BJ (cell line): ENCODE measurements at regions of chr11 and their contacts with region 1.

Region 1: DNA sequence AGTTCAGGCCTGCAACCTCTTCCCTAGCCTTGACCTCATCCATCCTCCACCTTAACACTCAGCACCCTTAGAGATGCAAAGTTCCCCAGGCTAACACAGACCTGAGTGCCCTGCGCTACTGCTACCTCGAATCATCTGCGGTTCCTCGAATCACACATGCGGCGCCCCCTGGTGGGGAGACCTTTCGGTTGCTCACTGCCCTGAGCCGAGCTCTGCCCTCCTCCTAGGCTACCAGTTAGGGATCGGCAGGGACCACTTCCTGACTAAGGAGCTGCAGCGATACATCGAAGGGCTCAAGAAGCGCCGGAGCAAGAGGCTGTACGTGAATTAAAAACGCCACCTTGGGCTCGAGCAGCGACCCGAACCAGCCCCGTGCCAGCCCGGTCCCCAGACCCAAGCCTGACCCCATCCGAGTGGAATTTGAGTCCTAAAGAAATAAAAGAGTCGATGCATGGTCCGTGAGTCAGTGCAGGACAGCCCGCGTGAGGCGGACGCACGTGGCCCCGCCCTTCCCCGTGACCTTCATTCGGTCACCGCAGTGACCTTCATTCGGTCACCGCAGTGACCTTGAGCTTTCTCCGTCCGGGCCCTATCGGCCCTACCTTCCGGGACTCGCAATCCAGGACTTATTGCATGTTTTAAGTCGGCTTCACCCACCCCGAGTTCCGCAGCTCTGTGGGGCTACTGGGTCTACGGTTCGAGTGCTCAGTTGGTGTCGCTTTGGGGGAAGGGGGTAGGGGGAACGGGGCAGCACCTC is 830 bp upstream of the ESRRA start:
- DNase-seq: peak; percentile 23
- H3K4me3 ChIP-seq: peak overlapping the region; percentile 66
- H3K27me3 ChIP-seq: peaks cover 8% of the 10 kb centered on the region; the same call in 1 of the 2 replicates
- CTCF ChIP-seq: peak; percentile 89

Region 2: GRCh38 chr11:64021757-64022093 is 282.8 kb before region 1 on chr11:
- CTCF ChIA-PET with region 1: no interaction called
- POLR2A ChIA-PET with region 1: no interaction called
- DNase-seq: no peak
- H3K4me3 ChIP-seq: no peak overlapping the region
- H3K27me3 ChIP-seq: no peaks in the 10 kb centered on the region
- CTCF ChIP-seq: no peak

Region 3: DNA sequence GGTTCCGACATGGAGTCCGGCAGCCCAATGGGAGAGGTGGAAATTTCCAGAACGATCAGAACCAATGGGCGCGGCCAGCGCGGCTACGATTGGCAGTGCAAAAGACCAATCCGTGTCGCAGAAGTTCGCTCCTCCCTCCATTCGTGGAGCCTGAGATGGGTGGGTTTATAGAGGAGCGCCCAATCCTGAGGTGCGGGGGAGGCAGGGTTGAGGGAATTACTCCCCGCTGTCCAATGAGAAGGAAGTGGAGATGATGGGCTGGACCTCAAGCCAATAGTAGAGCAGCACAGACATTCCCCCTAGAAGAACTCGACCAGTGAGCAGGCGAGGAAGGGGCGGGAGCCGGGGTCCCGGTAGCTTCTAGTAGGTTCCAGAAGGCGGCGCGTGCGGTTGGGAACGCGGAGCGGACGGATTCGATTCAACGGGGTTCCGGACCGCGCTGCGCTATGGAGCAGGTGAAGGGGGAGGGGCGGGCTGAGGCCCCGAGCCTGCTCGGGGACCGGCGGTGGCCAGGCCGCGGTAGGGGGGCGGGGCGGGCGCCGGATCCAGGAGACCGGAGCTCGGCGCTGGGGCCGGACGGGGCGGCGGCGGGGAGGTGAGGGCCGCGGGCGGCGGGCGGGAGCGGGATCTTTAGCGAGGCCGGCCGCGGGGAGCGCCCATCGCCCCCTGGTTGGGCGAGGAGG is 118.5 kb before region 1 on chr11 and contains the start of gene STIP1:
- CTCF ChIA-PET with region 1: interaction called, 19 read pairs
- POLR2A ChIA-PET with region 1: interaction called, 5 read pairs
- DNase-seq: peak; percentile 100
- H3K4me3 ChIP-seq: peak within 1 kb of the TSS; percentile 60
- H3K27me3 ChIP-seq: no peaks in the 10 kb centered on the region
- CTCF ChIP-seq: peak; percentile 68
- polyA plus RNA-seq, gene STIP1: 139 and 150 TPM in 2 replicates

Region 4: DNA sequence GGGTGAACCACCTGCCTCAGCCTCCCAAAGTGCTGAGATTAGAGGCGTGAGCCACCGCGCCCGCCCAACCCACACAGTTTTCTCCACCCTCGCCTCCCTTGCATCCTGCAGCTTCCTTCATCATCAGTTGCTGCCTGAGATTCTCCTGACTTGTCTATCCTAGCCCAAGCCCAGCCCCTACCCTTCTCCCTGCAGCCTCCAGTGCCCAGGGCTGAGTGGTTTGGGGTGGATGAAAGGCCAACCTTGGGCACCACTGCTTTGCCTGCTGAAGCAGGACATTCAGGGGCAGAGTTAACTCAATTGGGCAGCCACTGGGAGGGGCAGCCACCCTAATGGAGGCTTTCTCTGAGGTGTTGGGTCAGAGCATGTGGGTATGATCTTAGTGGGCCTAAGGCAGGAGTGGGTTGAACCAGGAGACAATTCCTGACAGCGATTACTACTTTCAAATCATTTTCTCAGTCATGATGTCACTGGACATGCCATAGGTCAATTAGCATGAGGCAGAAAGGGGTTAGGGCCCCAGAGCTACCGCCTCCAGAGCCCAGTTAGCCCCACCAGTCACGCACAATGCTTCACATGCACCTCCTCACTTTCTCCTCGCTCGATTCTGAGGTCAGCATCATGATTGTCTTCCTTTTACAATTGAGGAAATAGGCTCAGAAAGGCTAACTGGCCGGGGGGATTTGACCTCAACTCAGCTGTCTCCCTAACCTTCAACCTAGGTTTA is 64.7 kb before region 1 on chr11:
- CTCF ChIA-PET with region 1: interaction called, 92 read pairs
- POLR2A ChIA-PET with region 1: no interaction called
- DNase-seq: no peak
- H3K4me3 ChIP-seq: peak overlapping the region; percentile 93; the same call in 1 of the 2 replicates
- H3K27me3 ChIP-seq: no peaks in the 10 kb centered on the region
- CTCF ChIP-seq: no peak

Region 5: DNA sequence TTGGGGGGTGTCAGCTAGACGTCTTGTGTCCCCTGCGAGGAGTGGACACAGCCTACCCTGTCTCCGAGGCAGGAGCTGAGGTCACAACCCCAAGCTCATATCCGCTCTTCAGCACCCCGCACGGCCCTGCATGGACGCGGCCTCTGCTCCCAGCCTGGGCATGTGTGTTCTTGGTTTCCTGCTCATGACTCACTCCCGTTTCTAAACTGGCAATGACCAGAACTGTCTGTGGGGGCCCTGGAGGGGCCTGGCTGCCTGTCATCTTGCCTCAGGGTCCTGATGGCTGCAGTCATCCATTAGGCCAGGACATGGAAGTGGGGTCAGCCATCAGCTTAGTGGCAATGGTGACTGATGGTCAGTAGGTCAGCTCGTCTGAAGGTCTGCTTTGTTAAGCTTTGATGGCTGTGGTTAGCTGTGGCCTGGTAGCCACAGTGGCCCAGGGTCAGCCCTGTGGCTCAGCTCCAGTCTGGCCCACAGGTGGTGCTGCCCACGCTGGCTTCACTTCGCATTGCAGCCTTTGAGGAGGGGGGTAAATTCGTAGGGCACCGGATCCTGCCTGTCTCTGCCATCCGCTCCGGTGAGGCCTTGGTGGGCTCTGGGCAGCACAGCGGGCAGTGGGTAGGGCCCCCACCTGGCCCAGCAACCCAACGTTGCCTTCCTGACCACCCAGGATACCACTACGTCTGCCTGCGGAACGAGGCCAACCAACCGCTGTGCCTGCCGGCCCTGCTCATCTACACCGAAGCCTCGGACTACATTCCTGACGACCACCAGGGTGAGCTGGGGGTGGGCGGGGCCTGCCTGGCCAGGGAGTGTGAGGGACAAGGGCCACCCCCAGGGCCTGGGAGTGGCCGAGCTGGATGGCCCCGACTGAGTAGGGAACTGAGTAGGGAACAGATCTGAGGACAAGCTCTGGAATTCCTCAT is 41.2 kb before region 1 on chr11:
- CTCF ChIA-PET with region 1: interaction called, 13 read pairs
- POLR2A ChIA-PET with region 1: no interaction called
- DNase-seq: no peak
- H3K4me3 ChIP-seq: no peak overlapping the region
- H3K27me3 ChIP-seq: no peaks in the 10 kb centered on the region
- CTCF ChIP-seq: no peak

Region 6: DNA sequence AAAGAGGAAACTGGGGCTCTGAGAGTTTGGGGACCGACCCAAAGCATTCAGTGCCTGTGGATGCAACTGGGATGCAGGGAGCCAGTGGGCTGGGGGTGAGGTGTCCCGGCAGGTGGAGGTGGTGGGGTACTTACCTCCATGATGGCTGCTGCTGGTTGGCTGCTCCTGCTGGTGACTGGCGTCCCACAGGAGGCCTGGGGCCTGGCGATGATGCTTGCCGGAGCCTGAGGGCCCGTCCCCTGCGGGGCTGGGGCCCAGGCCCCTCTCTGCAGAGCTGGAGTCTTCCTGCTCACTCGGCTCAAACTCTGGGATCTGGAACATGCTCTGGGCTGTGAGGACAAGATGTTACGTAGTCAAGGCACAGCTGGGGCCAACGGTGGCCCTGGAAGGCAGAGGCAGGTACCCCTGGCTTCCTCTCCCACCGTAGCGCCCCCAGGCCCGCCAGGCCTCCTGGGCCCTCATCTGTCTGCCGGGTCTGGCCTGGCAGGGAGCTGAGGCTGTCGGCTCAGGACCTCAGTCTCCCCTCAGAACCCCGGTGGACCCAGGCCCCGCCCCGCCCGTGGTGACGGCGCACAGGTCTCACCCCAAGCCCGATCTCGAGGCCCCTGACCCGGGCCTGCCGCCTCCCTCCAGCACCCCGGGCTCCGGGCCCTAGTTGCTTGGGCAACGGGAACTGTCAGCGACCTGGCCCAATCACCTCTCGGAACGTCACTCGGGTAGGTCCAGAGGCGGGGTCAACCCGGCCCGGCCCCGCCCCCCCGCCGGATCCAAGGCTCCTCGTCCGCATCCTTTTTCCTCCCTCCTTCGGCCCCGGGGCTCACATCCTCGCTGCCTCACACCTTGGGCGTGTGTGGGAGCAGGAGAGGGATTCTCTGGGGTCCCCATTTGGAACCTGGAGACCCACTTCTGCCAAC is 20.2 kb before region 1 on chr11 and contains the start of gene BAD:
- CTCF ChIA-PET with region 1: interaction called, 88 read pairs
- POLR2A ChIA-PET with region 1: no interaction called
- DNase-seq: no peak
- H3K4me3 ChIP-seq: peak within 1 kb of the TSS; percentile 90
- H3K27me3 ChIP-seq: no peaks in the 10 kb centered on the region
- CTCF ChIP-seq: no peak
- polyA plus RNA-seq, gene BAD: 62.3 and 85.3 TPM in 2 replicates

Region 7: GRCh38 chr11:64331557-64332371 is 27.3 kb after region 1 on chr11:
- CTCF ChIA-PET with region 1: interaction called, 19 read pairs
- POLR2A ChIA-PET with region 1: no interaction called
- DNase-seq: no peak
- H3K4me3 ChIP-seq: no peak overlapping the region
- H3K27me3 ChIP-seq: no peaks in the 10 kb centered on the region
- CTCF ChIP-seq: peak; percentile 81